Sigmoid colon (tissue), 7 donors: ENCODE measurements at regions of chr7 and their contacts with region 1.

Region 1: GRCh38 chr7:42237162-42237821 is at the start of gene GLI3:
- DNase-seq: peak; percentile 98
- H3K4me3 ChIP-seq: peak within 1 kb of the TSS; percentile 67 to 88 (median 81)
- H3K27ac ChIP-seq: peak within 1 kb of the TSS; percentile 91 to 97 (median 96)
- H3K4me1 ChIP-seq: peaks cover 0 to 51% (median 41%) of the 10 kb centered on the region in 4 donors
- H3K27me3 ChIP-seq: no peaks in the 10 kb centered on the region
- CTCF ChIP-seq: peak in 2 of 4 experiments; percentile 15 to 20
- EP300 ChIP-seq: no peak
- POLR2A ChIP-seq: peak; percentile 21 to 30
- total RNA-seq, gene GLI3: 17.2 to 31.6 (median 18.9) TPM

Region 2: GRCh38 chr7:41705109-41705901 is 532.0 kb before region 1 on chr7:
- intact Hi-C with region 1: loop called (anchors 5 kb)
- DNase-seq: peak; percentile 90
- H3K4me3 ChIP-seq: peak overlapping the region; percentile 30 to 60 (median 52)
- H3K27ac ChIP-seq: peak overlapping the region; percentile 66 to 86 (median 80)
- H3K4me1 ChIP-seq: peaks cover 0 to 21% (median 14%) of the 10 kb centered on the region in 4 donors
- H3K27me3 ChIP-seq: no peaks in the 10 kb centered on the region
- CTCF ChIP-seq: peak in 3 of 4 experiments; percentile 21 to 60 (median 57)
- EP300 ChIP-seq: no peak
- POLR2A ChIP-seq: no peak

Region 3: GRCh38 chr7:42097757-42098191 is 139.5 kb before region 1 on chr7:
- intact Hi-C with region 1: loop called (anchors 10 kb)
- DNase-seq: no peak
- H3K4me3 ChIP-seq: no peak overlapping the region
- H3K27ac ChIP-seq: peak overlapping the region; percentile 63 to 77 (median 72)
- H3K4me1 ChIP-seq: peaks cover 0 to 52% (median 37%) of the 10 kb centered on the region in 4 donors
- H3K27me3 ChIP-seq: no peaks in the 10 kb centered on the region
- CTCF ChIP-seq: no peak
- EP300 ChIP-seq: no peak
- POLR2A ChIP-seq: no peak

Region 4: GRCh38 chr7:42348631-42349030 is 111.3 kb after region 1 on chr7:
- intact Hi-C with region 1: loop called (anchors 5 kb)
- DNase-seq: no peak
- H3K4me3 ChIP-seq: no peak overlapping the region
- H3K27ac ChIP-seq: peak overlapping the region in 2 of 4 donors; percentile 19 to 52
- H3K4me1 ChIP-seq: peaks cover 0 to 41% (median 25%) of the 10 kb centered on the region in 4 donors
- H3K27me3 ChIP-seq: no peaks in the 10 kb centered on the region
- CTCF ChIP-seq: no peak
- EP300 ChIP-seq: no peak
- POLR2A ChIP-seq: no peak

Region 5: GRCh38 chr7:42574685-42575084 is 337.4 kb after region 1 on chr7:
- intact Hi-C with region 1: loop called (anchors 2 kb)
- DNase-seq: no peak
- H3K4me3 ChIP-seq: no peak overlapping the region
- H3K27ac ChIP-seq: peak overlapping the region in 3 of 4 donors; percentile 53 to 74 (median 68)
- H3K4me1 ChIP-seq: peaks cover 0 to 58% (median 45%) of the 10 kb centered on the region in 4 donors
- H3K27me3 ChIP-seq: no peaks in the 10 kb centered on the region
- CTCF ChIP-seq: peak in 3 of 4 experiments; percentile 13 to 30 (median 29)
- EP300 ChIP-seq: no peak
- POLR2A ChIP-seq: no peak

Region 6: GRCh38 chr7:42831718-42832431 is 594.6 kb after region 1 on chr7:
- intact Hi-C with region 1: loop called (anchors 5 kb)
- DNase-seq: peak; percentile 80
- H3K4me3 ChIP-seq: no peak overlapping the region
- H3K27ac ChIP-seq: peak overlapping the region in 3 of 4 donors; percentile 40 to 69 (median 65)
- H3K4me1 ChIP-seq: peaks cover 0 to 26% (median 20%) of the 10 kb centered on the region in 4 donors
- H3K27me3 ChIP-seq: no peaks in the 10 kb centered on the region
- CTCF ChIP-seq: peak; percentile 55 to 76 (median 72)
- EP300 ChIP-seq: no peak
- POLR2A ChIP-seq: no peak